Dendritic cell treated with granulocyte-macrophage colony-stimulating factor and Interleukin-4, amounts not matched to agents 40 ng/mL and 50 ng/mL, for 4 days (primary cell): ENCODE measurements at regions of chr4 and their contacts with region 1.

Region 1: DNA sequence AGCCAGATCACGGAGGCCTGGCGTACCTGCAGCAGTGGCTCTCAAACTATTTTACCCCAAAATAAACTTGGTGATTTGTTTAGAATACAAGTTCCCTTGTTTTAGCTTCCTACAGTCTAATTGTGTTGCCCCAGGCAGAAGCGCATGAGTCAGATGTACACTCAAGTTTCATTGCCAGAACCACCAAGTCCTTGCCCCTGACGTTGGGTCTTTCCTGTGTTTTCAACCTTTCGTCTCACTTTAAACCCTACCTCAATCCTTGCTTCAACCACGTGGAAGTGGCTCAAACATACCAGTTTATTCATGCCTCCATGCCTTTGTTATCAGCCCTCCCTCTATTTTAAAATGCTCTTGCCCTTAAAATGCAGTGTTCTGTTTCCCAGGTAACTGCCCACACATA is 66.3 kb upstream of the SLC7A11 start:
- H3K4me3 Mint-ChIP-seq: no peak overlapping the region
- H3K27ac Mint-ChIP-seq: peak overlapping the region; percentile 87
- H3K4me1 Mint-ChIP-seq: peaks cover 20% of the 10 kb centered on the region
- H3K27me3 Mint-ChIP-seq: no peaks in the 10 kb centered on the region

Region 2: DNA sequence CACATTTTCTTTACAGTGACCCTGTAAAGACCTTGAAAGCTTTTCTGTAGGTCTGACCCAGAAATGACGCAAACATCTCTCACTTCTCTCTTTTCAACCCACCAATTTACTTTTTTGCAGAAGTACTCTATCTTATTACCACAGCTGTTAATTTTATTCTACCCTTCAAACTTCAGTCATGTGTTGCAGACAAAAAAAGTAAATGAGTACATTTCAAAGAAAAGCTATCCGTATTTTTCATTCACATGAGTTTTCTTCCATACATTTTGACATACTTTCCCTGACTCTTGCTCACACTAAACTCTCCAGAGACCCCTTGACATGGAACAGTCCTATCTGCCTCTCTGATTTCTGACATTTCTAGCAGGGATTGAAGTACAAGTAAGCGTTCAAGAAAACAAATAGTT is 118.0 kb before region 1 on chr4:
- intact Hi-C with region 1: loop called (anchors 5 kb)
- H3K4me3 Mint-ChIP-seq: peak overlapping the region; percentile 5
- H3K27ac Mint-ChIP-seq: peak overlapping the region; percentile 83
- H3K4me1 Mint-ChIP-seq: peaks cover 59% of the 10 kb centered on the region
- H3K27me3 Mint-ChIP-seq: no peaks in the 10 kb centered on the region

Region 3: GRCh38 chr4:138242076-138242833 is 66.2 kb before region 1 on chr4 and contains the start of gene SLC7A11:
- intact Hi-C with region 1: loop called (anchors 2 kb)
- H3K4me3 Mint-ChIP-seq: peak within 1 kb of the TSS; percentile 91
- H3K27ac Mint-ChIP-seq: peak within 1 kb of the TSS; percentile 98
- H3K4me1 Mint-ChIP-seq: peaks cover 19% of the 10 kb centered on the region
- H3K27me3 Mint-ChIP-seq: no peaks in the 10 kb centered on the region

Region 4: GRCh38 chr4:138297743-138298405 is 10.5 kb before region 1 on chr4:
- intact Hi-C with region 1: no loop called
- H3K4me3 Mint-ChIP-seq: no peak overlapping the region
- H3K27ac Mint-ChIP-seq: no peak overlapping the region
- H3K4me1 Mint-ChIP-seq: peaks cover 25% of the 10 kb centered on the region
- H3K27me3 Mint-ChIP-seq: no peaks in the 10 kb centered on the region

Region 5: GRCh38 chr4:138405934-138406567 is 97.6 kb after region 1 on chr4:
- intact Hi-C with region 1: loop called (anchors 5 kb)
- H3K4me3 Mint-ChIP-seq: peak overlapping the region; percentile 14
- H3K27ac Mint-ChIP-seq: peak overlapping the region; percentile 87
- H3K4me1 Mint-ChIP-seq: peaks cover 52% of the 10 kb centered on the region
- H3K27me3 Mint-ChIP-seq: no peaks in the 10 kb centered on the region

Region 6: DNA sequence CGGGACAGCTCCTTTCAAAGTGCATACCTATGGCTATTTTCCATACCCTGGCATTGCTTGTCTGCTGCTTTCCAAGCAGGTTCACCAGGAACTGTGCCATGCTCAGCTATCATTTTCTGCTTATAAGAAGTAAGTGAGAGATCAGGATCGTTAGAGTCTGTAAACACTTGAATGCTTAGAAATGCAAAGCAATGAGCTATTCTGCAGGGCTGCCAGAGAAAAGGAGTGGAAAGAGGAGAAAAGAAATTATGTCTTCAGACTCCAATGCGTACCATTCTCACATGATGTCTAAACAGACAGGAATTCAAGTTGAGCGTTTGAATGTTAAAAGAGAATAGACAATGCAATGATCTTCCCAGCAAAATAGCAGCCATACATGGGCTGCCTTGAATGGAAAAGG is 179.3 kb after region 1 on chr4:
- intact Hi-C with region 1: loop called (anchors 5 kb)
- H3K4me3 Mint-ChIP-seq: no peak overlapping the region
- H3K27ac Mint-ChIP-seq: no peak overlapping the region
- H3K4me1 Mint-ChIP-seq: peaks cover 14% of the 10 kb centered on the region
- H3K27me3 Mint-ChIP-seq: no peaks in the 10 kb centered on the region

Region 7: DNA sequence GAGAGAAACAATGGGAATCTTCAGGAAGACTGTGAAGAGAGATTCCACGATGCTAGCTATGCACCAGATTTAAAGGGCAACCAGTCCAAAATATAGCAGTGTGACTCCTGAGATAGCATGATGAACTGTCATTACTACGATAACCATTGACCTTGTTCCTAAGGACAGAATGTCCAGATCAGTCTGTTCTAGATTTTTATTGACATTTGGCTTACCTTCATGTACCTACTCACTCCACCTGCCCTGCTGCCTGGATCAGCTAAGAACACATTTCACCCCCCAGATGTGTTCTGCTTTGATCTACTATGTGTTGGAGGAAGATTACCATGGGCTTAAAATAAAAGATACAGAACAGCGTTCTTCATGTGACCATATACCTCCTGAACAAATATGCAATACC is 818.5 kb after region 1 on chr4:
- intact Hi-C with region 1: no loop called
- H3K4me3 Mint-ChIP-seq: no peak overlapping the region
- H3K27ac Mint-ChIP-seq: no peak overlapping the region
- H3K4me1 Mint-ChIP-seq: no peaks in the 10 kb centered on the region
- H3K27me3 Mint-ChIP-seq: no peaks in the 10 kb centered on the region